HEK293T (cell line): ENCODE measurements at regions of chr16 and their contacts with region 1.

Region 1: GRCh38 chr16:9090960-9091866 is at the start of gene HAPSTR1:
- DNase-seq: peak; percentile 94

Region 2: GRCh38 chr16:9081158-9081557 is 10.1 kb before region 1 on chr16:
- CTCF ChIA-PET with region 1: no interaction called
- POLR2A ChIA-PET with region 1: interaction called, 13 read pairs
- DNase-seq: no peak